OCI-LY7 (cell line): ENCODE measurements at regions of chr1 and their contacts with region 1.

Region 1: DNA sequence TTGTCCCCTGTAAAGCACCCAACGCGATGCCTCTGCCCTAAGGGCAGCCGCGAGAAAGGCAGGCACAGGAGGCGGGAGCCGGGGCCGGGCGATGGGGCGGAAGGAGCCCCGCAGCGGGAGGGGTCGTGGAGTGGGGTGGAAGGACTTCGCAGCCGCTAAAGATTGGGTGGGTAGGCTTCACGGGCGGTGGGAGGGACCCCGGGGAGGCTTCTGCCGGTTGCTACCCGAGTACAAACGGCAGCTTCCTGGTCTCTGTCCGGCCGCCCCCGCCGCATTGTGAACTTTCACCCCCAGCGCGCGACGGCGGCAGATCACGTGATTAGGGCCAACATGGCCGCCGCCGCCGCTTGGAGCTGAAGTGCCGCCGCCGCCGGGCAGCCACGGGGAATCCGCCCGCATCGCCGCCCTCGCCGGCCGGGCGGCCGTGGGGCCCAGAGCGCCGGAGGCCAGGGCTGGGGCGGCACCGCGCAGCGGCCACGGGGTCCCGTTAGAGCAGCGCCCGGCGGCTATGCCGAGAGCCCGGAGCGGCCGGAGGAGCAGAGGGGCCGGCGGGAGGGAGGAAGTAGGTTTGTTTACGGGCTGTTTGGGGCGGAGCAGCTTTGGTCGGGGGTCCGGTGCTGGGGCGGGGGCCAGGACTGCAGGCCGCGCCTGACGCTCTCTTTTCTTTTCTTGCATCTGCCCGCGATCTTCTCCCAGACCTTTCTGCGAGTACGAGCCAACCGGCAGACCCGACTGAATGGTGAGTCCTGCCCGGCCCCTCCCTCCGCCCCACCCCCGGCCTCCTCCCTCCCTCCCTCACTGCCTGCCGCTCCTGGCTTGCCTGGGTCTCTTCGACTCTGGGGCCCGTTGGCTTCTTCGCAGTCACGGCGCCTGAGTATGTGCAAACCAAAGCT is 42.4 kb downstream of the TMEM53 start:
- DNase-seq: peak; percentile 93
- H3K4me3 ChIP-seq: peak overlapping the region; percentile 92
- H3K27ac ChIP-seq: peak overlapping the region; percentile 79
- H3K4me1 ChIP-seq: peaks cover 26% of the 10 kb centered on the region
- CTCF ChIP-seq: no peak

Region 2: DNA sequence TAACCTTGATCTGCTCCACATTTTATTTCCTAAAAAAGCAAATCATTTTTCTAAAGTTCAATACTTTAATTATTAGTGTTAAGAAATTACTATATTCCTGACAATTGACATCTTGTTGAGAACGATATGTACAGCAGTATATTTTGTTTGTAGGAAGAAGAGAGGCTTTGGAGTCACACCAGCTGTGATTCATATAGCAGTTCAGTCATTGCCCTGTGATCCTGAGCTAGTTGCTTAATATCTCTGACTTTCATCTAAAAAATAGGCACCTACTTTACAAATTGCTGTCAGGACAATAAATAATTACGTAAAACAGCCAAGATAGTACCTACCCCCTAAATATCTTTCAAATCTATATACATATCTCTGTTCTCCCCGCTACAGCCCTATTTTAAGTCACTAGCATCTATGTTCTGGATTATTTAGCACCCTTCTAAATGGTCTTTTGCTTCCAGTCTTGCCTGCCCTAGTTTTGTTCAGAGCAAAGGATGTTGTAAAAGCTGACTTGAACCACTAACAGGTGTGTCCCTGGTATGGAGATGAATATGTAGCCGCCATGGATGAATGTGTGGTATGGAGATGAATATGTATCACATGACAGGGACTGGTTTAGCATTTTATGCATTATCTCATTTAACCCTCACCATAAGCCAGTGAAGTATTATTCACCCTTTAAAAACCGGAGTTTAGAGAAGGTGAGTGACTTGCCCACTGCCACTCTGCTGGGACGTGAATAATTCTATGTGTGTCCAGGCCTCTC is 184.7 kb before region 1 on chr1:
- CTCF ChIA-PET with region 1: no interaction called
- POLR2A ChIA-PET with region 1: no interaction called
- intact Hi-C with region 1: no loop called
- DNase-seq: no peak
- H3K4me3 ChIP-seq: no peak overlapping the region
- H3K27ac ChIP-seq: no peak overlapping the region
- H3K4me1 ChIP-seq: no peaks in the 10 kb centered on the region
- CTCF ChIP-seq: no peak

Region 3: DNA sequence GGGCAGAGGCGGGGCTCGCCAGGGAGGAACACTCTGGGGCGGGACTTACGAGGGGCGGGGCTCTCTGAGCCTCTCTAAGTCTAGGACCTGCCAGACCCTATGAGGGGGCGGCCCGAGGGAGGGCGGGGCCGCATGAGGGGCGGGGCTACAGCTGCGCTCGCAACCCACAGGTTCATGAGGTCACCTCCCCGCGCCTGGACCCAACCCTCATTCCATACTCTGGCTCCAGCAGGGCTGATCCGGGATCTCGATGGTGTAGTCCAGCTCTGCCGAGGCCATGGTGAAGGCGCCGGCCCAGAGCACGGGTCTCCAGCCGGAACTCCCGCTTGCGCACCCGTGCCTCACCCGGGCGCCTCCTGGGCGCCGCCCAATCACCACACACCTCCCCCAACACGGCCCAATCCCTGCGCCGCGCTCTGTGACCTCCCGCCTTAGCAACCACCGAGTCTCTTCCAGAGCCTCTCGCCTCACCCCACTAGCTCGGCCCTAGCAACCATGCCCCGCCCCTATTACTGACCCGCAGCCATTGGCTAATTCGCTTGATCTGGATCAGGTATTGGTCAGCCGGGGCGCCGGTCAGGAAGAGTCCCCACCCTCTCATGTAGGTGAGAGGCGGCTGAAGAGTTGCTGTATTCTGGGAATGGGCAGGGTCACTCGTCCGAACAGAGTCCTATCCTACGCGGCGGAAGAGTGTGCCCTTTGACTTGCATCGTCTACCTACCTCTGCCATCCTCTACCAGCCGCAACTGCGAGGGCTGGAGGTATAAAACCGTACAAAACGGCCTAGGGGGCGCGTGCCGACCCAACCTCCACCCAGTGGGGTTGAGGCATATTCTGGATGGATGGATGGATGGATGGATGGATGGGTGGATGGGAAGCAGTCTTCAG is 42.5 kb after region 1 on chr1 and contains the starts of genes ARMH1 and TMEM53:
- CTCF ChIA-PET with region 1: no interaction called
- POLR2A ChIA-PET with region 1: interaction called, 17 read pairs
- intact Hi-C with region 1: loop called (anchors 2 kb)
- DNase-seq: peak; percentile 99
- H3K4me3 ChIP-seq: peak within 1 kb of the TSS; percentile 73
- H3K27ac ChIP-seq: peak within 1 kb of the TSS; percentile 53
- H3K4me1 ChIP-seq: peaks cover 54% of the 10 kb centered on the region
- CTCF ChIP-seq: peak; percentile 57
- total RNA-seq, gene ARMH1: 5.3 and 7.8 TPM in 2 replicates
- total RNA-seq, gene TMEM53: 5.5 and 6.6 TPM in 2 replicates

Region 4: DNA sequence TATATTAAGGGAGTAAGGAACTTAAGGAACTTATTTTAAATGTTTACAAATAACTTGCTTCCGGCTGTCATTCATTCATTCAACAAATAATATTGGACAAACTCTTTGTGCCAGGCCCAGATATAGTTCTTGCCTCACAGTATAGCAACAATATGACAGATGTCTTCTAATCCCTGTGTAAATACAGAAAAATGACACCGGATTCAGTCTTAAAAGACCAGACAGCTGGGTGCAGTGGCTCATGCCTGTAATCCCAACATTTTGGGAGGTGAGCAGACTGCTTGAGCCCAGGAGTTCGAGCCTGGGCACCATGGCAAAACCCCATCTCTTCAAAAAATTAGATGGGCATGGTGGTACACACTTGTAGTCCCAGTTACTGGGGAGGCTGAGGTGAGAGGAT is 330.8 kb after region 1 on chr1:
- CTCF ChIA-PET with region 1: no interaction called
- POLR2A ChIA-PET with region 1: no interaction called
- intact Hi-C with region 1: no loop called
- DNase-seq: no peak
- H3K4me3 ChIP-seq: no peak overlapping the region
- H3K27ac ChIP-seq: no peak overlapping the region
- H3K4me1 ChIP-seq: no peaks in the 10 kb centered on the region
- CTCF ChIP-seq: no peak